Right lobe of liver (tissue), 6 donors: ENCODE measurements at regions of chr16 and their contacts with region 1.

Region 1: GRCh38 chr16:21158208-21159110 is at the start of gene LDAF1:
- DNase-seq: peak; percentile 74 to 86 (median 84)
- ATAC-seq: peak; percentile 94 to 96 (median 94)
- H3K4me3 ChIP-seq: peak within 1 kb of the TSS; percentile 55 to 75 (median 65)
- H3K27ac ChIP-seq: no peak within 1 kb of the TSS
- H3K4me1 ChIP-seq: peaks cover 0 to 4% (median 0%) of the 10 kb centered on the region in 4 donors
- H3K27me3 ChIP-seq: no peaks in the 10 kb centered on the region
- CTCF ChIP-seq: no peak
- POLR2A ChIP-seq: no peak
- total RNA-seq, gene LDAF1: 1.5 to 3.1 (median 2.1) TPM

Region 2: DNA sequence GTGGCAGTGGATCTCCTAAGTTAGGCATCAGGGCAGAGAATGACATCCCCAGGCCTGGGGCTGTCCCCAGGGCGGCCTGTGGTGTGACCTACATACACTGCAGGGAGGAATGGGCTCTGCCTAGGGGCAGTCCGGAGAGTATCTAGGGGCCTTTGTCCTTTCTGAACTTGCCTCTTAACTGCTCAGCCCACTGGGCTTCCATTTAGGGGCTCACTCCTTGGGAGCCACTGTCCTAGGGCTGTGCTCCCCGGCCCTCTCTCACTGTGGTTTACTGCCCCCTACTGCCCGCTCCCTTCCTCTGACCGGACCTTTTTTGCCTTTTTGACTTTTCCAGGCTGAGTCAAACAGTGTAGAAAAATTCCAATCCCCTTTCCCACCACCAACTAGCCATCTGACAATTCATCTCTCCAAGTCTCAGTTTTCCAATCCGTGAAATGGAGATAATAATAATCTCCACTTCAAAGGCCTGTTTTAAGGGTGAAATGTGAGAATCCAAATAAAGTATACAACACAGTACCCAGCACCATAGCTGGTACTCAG is 74.7 kb before region 1 on chr16:
- intact Hi-C with region 1: no loop called
- DNase-seq: peak; percentile 54 to 62 (median 60)
- ATAC-seq: peak; percentile 93 to 98 (median 94)
- H3K4me3 ChIP-seq: no peak overlapping the region
- H3K27ac ChIP-seq: no peak overlapping the region
- H3K4me1 ChIP-seq: no peaks in the 10 kb centered on the region
- H3K27me3 ChIP-seq: no peaks in the 10 kb centered on the region
- CTCF ChIP-seq: peak; percentile 70 to 78 (median 74)
- POLR2A ChIP-seq: no peak

Region 3: DNA sequence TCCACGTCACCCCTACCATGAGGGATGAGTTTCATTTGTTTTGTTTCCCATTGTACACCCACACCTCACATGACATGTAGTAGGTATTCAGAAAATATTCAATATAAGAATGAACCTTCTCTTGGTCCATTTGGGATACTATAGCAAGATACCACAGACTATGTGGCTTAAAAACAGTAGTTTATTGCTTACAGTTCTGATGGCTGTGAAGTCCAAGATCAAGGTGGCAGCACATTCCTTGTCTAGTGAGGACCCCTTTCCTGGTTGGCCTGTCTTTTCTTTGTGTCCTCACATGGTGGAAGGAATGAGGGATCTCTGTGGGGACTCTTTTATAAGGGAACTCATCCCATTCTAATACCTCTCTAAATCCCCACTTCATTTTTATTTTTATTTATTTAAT is 155.9 kb after region 1 on chr16:
- intact Hi-C with region 1: loop called in 1 of 2 experiments (anchors 10 kb)
- DNase-seq: no peak
- ATAC-seq: no peak
- H3K4me3 ChIP-seq: no peak overlapping the region
- H3K27ac ChIP-seq: no peak overlapping the region
- H3K4me1 ChIP-seq: no peaks in the 10 kb centered on the region
- H3K27me3 ChIP-seq: no peaks in the 10 kb centered on the region
- CTCF ChIP-seq: no peak
- POLR2A ChIP-seq: no peak

Region 4: GRCh38 chr16:21338537-21339268 is 180.2 kb after region 1 on chr16:
- intact Hi-C with region 1: no loop called
- DNase-seq: no peak
- ATAC-seq: no peak
- H3K4me3 ChIP-seq: no peak overlapping the region
- H3K27ac ChIP-seq: no peak overlapping the region
- H3K4me1 ChIP-seq: no peaks in the 10 kb centered on the region
- H3K27me3 ChIP-seq: no peaks in the 10 kb centered on the region
- CTCF ChIP-seq: no peak
- POLR2A ChIP-seq: no peak

Region 5: GRCh38 chr16:21554795-21555585 is 396.5 kb after region 1 on chr16:
- intact Hi-C with region 1: loop called in 1 of 2 experiments (anchors 10 kb)
- DNase-seq: peak; percentile 81 to 91 (median 90)
- ATAC-seq: peak; percentile 92 to 99 (median 97)
- H3K4me3 ChIP-seq: no peak overlapping the region
- H3K27ac ChIP-seq: no peak overlapping the region
- H3K4me1 ChIP-seq: no peaks in the 10 kb centered on the region
- H3K27me3 ChIP-seq: no peaks in the 10 kb centered on the region
- CTCF ChIP-seq: peak; percentile 93 to 100 (median 100)
- POLR2A ChIP-seq: no peak